Right ventricle myocardium inferior (tissue), 1 donor: ENCODE measurements at regions of chr20 and their contacts with region 1.

Region 1: GRCh38 chr20:57809596-57810172 is 99.9 kb upstream of the PMEPA1 start:
- DNase-seq: peak; percentile 78
- ATAC-seq: peak; percentile 85

Region 2: DNA sequence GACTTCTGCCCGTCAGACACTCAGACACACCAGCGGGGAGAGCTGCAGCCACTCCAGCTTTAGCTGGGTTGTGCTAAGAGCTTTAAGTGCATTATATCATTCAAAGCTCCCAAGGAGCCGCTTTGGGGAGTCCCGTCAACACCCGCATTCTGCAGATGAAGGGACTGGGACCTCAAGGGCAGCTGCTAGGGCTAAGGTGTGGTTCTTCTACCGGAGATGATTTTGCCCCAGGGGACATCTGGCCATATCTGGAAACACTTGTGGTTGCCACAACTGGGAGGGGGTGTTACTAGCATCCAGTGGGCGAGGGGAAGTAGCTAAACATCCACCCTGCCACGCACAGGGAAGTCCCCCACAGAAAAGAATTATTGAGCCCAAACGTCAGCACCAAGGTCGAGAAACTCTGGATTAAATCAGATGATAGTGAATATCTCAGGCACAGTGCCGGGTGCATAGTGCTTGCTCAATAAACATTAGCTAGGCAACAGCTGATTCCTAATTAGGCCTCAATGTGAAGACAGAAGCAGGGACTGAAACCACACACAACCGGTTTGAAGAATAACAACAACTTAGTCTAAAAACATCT is 129.5 kb before region 1 on chr20:
- intact Hi-C with region 1: loop called (anchors 5 kb)
- DNase-seq: no peak
- ATAC-seq: no peak

Region 3: GRCh38 chr20:58839474-58839874 is 1029.8 kb after region 1 on chr20:
- intact Hi-C with region 1: no loop called
- DNase-seq: no peak
- ATAC-seq: peak; percentile 37